ENCODE measurements at regions of chr20 and their contacts with region 1.

Region 1: DNA sequence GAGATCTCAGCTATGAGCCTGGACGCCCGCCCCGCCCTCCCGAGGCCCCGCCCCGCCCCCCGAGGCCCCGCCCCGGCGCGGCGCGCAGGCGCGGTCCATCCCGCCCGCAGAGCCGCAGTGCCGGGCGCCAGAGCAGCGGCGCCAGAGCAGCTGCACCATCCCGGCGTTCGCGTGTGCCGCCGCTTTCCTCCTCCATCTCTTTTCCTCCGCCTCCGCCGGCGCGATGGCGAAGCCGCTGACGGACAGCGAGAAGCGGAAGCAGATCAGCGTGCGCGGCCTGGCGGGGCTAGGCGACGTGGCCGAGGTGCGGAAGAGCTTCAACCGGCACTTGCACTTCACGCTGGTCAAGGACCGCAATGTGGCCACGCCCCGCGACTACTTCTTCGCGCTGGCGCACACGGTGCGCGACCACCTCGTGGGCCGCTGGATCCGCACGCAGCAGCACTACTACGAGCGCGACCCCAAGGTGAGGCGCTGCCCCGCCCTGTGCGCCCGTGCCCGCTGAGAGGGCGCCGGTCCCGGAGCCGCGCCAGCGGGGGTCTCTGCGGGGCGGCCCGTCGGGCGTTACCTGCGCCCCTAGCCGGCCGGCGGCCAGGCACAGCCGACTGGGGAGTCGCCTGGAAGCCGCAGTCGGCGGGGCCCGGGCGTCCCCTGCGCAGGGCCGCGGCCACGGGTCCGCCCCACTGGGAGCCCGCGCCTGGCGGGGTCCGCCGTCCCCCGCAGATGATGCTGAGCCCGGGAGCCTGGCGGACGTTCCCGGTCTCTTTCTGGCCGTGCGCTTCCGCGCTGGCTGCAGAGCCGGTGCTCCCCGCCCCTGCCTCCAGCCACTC is at the start of gene PYGB:
- DNase-seq: peak; percentile 78
- H3K4me3 Mint-ChIP-seq: peak within 1 kb of the TSS; percentile 93
- H3K27ac Mint-ChIP-seq: peak within 1 kb of the TSS; percentile 77
- H3K4me1 Mint-ChIP-seq: peaks cover 33% of the 10 kb centered on the region
- H3K27me3 Mint-ChIP-seq: no peaks in the 10 kb centered on the region
- CTCF ChIP-seq: no peak
- total RNA-seq, gene PYGB: 375 and 435 TPM in 2 replicates

Region 2: GRCh38 chr20:24992487-24993205 is 255.5 kb before region 1 on chr20 and contains the start of gene APMAP:
- CTCF ChIA-PET with region 1: interaction called, 14 read pairs
- POLR2A ChIA-PET with region 1: interaction called, 152 read pairs
- intact Hi-C with region 1: loop called (anchors 2 kb)
- DNase-seq: peak; percentile 91
- H3K4me3 Mint-ChIP-seq: peak within 1 kb of the TSS; percentile 97
- H3K27ac Mint-ChIP-seq: peak within 1 kb of the TSS; percentile 97
- H3K4me1 Mint-ChIP-seq: peaks cover 60% of the 10 kb centered on the region
- H3K27me3 Mint-ChIP-seq: no peaks in the 10 kb centered on the region
- CTCF ChIP-seq: no peak
- total RNA-seq, gene APMAP: 75.3 and 104 TPM in 2 replicates

Region 3: GRCh38 chr20:25065625-25066338 is 182.4 kb before region 1 on chr20:
- CTCF ChIA-PET with region 1: interaction called, 7 read pairs
- POLR2A ChIA-PET with region 1: interaction called, 10 read pairs
- intact Hi-C with region 1: loop called (anchors 10 kb)
- DNase-seq: peak; percentile 59
- H3K4me3 Mint-ChIP-seq: no peak overlapping the region
- H3K27ac Mint-ChIP-seq: no peak overlapping the region
- H3K4me1 Mint-ChIP-seq: peaks cover 12% of the 10 kb centered on the region
- H3K27me3 Mint-ChIP-seq: peaks cover 68% of the 10 kb centered on the region
- CTCF ChIP-seq: peak; percentile 57

Region 4: GRCh38 chr20:25126630-25127029 is 121.5 kb before region 1 on chr20:
- CTCF ChIA-PET with region 1: no interaction called
- POLR2A ChIA-PET with region 1: no interaction called
- intact Hi-C with region 1: no loop called
- DNase-seq: no peak
- H3K4me3 Mint-ChIP-seq: no peak overlapping the region
- H3K27ac Mint-ChIP-seq: no peak overlapping the region
- H3K4me1 Mint-ChIP-seq: no peaks in the 10 kb centered on the region
- H3K27me3 Mint-ChIP-seq: peaks cover 9% of the 10 kb centered on the region
- CTCF ChIP-seq: no peak

Region 5: DNA sequence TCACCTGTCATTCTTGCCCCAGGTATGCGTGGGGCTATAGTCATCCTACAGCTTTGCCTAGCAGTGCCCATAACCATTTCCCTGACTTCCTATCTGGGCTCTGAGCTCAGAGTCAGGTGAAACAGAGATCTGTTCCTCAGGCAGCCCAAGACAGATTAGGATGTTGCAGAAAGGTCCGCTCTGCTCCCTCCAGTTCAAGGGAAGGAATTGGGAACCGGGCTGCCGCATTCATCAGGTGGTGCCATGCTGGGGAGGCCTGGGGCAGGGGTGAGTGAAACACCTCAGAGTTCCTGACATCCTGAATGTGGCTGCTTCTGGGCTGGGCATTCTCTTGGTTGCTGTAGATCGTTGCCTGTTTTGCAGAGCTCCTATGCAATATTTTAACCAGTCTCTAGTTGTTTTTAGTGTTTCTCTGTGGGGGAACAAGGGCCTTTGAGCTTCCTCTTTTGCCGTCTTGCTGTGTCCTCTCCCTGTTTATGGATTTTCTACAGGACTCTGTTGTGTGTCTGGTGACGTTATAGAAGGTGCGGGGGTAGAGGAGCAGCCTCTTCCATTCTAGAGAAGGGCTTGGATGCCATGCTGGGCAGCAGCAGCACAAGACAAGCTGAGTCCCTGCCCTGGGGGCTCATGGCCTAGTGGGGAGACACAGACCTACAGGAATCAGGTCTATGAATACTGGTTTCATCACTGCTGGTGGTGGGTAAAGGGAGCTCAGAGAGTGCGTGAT is 43.5 kb before region 1 on chr20:
- CTCF ChIA-PET with region 1: interaction called, 9 read pairs
- POLR2A ChIA-PET with region 1: interaction called, 81 read pairs
- intact Hi-C with region 1: loop called (anchors 2 kb)
- DNase-seq: no peak
- H3K4me3 Mint-ChIP-seq: no peak overlapping the region
- H3K27ac Mint-ChIP-seq: peak overlapping the region; percentile 89
- H3K4me1 Mint-ChIP-seq: peaks cover 37% of the 10 kb centered on the region
- H3K27me3 Mint-ChIP-seq: no peaks in the 10 kb centered on the region
- CTCF ChIP-seq: no peak

Region 6: DNA sequence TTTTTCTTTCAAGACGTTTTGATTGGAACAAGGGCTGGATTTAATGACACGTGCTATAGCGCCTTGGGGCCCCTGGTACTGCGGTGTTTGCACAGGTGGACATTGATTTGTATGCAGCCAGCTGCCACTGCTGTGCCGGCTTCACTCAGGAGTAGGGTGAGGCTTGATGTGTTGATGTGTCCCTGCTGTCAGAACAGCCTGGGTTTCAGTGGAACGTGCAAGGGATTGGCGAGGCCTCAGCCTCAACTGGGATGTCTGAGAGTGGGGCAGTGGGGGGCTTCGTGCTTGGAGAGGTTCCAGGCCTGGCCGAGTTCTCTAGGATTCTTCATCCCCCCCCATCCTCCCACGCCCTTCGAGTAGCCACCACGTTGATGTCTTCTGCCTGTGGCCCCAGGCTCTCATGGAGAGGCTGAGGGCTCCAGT is 22.7 kb after region 1 on chr20:
- CTCF ChIA-PET with region 1: interaction called, 3 read pairs
- POLR2A ChIA-PET with region 1: interaction called, 16 read pairs
- intact Hi-C with region 1: no loop called
- DNase-seq: no peak
- H3K4me3 Mint-ChIP-seq: no peak overlapping the region
- H3K27ac Mint-ChIP-seq: no peak overlapping the region
- H3K4me1 Mint-ChIP-seq: peaks cover 7% of the 10 kb centered on the region
- H3K27me3 Mint-ChIP-seq: no peaks in the 10 kb centered on the region
- CTCF ChIP-seq: no peak

Region 7: GRCh38 chr20:25310268-25310920 is 62.2 kb after region 1 on chr20:
- CTCF ChIA-PET with region 1: interaction called, 4 read pairs
- POLR2A ChIA-PET with region 1: interaction called, 16 read pairs
- intact Hi-C with region 1: no loop called
- DNase-seq: peak; percentile 91
- H3K4me3 Mint-ChIP-seq: peak overlapping the region; percentile 56
- H3K27ac Mint-ChIP-seq: peak overlapping the region; percentile 88
- H3K4me1 Mint-ChIP-seq: peaks cover 32% of the 10 kb centered on the region
- H3K27me3 Mint-ChIP-seq: no peaks in the 10 kb centered on the region
- CTCF ChIP-seq: peak; percentile 30